Vagina (tissue), 2 donors: ENCODE measurements at regions of chr3 and their contacts with region 1.

Region 1: GRCh38 chr3:161274719-161275298 is 53.7 kb downstream of the NMD3 start:
- DNase-seq: no peak
- H3K4me3 ChIP-seq: no peak overlapping the region
- H3K27ac ChIP-seq: no peak overlapping the region
- H3K4me1 ChIP-seq: no peaks in the 10 kb centered on the region
- H3K27me3 ChIP-seq: no peaks in the 10 kb centered on the region
- CTCF ChIP-seq: no peak
- POLR2A ChIP-seq: no peak

Region 2: GRCh38 chr3:161423911-161424522 is 149.2 kb after region 1 on chr3:
- intact Hi-C with region 1: loop called (anchors 5 kb)
- DNase-seq: no peak
- H3K4me3 ChIP-seq: no peak overlapping the region
- H3K27ac ChIP-seq: no peak overlapping the region
- H3K4me1 ChIP-seq: no peaks in the 10 kb centered on the region
- H3K27me3 ChIP-seq: no peaks in the 10 kb centered on the region
- CTCF ChIP-seq: peak; percentile 59 to 90 (median 69)
- POLR2A ChIP-seq: no peak